GM13977 (cell line): ENCODE measurements at regions of chr3 and their contacts with region 1.

Region 1: GRCh38 chr3:151168269-151169094 is 34.5 kb downstream of the GPR171 start:
- DNase-seq: peak; percentile 47
- CTCF ChIP-seq: peak; percentile 89

Region 2: DNA sequence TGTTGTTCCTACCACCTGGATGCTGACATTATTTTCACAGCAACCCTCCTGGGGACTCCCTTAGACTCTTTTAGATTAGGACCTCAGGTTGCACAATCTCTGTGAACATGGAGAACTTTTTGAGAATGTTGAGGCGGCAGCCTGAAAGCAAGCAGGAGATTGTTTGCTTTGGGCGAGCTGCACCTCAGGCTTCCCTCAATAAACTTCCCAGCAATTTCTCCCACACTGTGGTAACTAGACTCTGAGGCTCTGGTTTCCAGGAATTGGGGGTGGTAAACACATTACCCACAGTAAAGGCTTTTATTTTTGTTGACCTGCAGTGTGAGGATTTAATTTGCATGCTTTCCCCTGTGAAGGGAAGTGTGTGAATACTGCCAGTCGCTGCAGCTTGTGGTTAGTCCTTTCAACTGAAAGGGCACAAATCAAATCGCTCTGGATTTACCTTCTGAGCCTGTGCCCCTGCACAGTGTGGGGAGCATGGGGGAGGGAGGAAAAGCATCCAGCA is 370.3 kb before region 1 on chr3:
- in situ Hi-C with region 1: no loop called
- DNase-seq: no peak
- CTCF ChIP-seq: no peak

Region 3: GRCh38 chr3:151037746-151038477 is 130.6 kb before region 1 on chr3:
- in situ Hi-C with region 1: no loop called
- DNase-seq: no peak
- CTCF ChIP-seq: no peak

Region 4: DNA sequence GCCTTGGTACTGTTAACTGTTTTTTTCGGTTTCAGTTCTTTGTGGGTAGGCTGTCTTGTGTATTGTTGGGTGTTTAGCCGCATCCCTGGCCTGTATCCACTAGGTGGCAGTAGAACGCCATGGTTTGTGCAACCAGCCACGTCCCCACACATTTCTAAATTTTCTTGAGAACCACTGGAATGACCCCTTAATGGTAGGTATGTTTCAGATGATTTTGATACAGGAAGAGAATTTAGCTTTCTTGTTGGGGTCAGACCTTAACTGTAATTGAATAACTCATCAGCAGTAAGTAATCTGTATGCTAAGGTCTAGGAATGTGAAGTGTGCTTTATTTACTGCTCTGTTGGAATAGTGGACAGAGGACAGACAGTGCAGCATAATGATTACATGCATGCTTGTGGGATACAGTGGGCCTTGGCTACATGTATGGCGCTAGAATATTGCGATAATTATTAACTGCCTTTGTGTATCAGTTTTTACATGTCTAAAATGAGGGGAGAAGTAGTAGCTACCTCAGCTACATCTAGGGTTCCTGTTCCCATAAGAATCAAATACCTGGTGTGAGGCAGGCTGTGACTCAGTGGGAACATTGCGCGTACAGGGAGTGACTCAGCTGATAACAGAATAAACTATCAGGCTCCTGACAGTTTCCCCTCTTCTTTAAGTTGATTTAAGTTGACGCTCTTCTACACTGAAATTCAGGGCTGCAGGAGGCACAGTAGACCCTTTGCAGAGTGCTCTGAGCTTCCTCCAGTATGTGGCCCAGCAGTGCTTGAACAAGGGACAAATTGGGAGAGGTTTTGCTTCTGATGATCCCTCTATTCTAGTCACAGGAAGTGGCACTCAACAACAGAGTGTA is 59.6 kb after region 1 on chr3:
- in situ Hi-C with region 1: loop called (anchors 10 kb)
- DNase-seq: peak; percentile 78
- CTCF ChIP-seq: peak; percentile 88

Region 5: DNA sequence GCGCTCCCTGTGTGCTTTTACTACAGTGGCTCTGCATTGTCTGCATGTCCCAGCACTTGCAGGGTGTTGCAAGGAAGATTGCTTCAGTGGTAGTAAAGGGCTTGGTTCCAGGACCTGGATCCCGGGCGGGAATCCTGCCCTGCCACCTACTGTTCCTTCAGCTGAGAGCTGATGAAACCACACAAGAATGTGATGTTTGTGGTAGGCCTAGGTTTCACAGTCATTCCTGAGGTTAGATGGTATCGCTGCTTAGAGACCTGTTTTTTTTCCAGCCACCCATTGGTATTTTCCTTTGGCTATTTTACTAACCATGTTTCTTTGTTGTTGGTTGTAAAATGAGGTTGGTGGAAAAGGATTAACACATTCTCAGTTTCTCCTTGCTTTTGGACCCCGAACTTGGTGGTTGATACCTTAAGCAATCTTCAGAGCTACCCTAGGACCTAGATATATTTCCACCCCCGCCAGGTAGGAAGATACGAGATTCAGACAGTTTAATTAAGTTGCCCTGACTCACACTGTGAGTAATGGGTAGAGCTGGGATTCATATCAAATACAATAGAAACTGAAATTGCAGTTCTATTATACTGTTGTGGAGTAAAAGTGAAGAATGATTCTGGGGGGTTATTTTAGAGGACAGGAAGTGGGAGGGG is 136.7 kb after region 1 on chr3:
- in situ Hi-C with region 1: no loop called
- DNase-seq: no peak
- CTCF ChIP-seq: no peak

Region 6: GRCh38 chr3:151395806-151396205 is 227.3 kb after region 1 on chr3:
- in situ Hi-C with region 1: no loop called
- DNase-seq: no peak
- CTCF ChIP-seq: no peak